ENCODE measurements at regions of chr2 and their contacts with region 1.

Region 1: GRCh38 chr2:199985625-199986207 is 30.3 kb downstream of the MAIP1 start:
- DNase-seq: peak; percentile 38
- ATAC-seq: peak; percentile 93
- H3K4me3 ChIP-seq: no peak overlapping the region
- H3K27ac ChIP-seq: peak overlapping the region; percentile 58; the same call in 1 of the 2 replicates
- H3K4me1 ChIP-seq: no peaks in the 10 kb centered on the region
- H3K27me3 ChIP-seq: no peaks in the 10 kb centered on the region
- CTCF ChIP-seq: peak; percentile 87

Region 2: GRCh38 chr2:200156166-200156835 is 170.6 kb after region 1 on chr2:
- CTCF ChIA-PET with region 1: no interaction called
- POLR2A ChIA-PET with region 1: no interaction called
- in situ Hi-C with region 1: no loop called
- intact Hi-C with region 1: no loop called
- DNase-seq: peak; percentile 20
- ATAC-seq: peak; percentile 66; the same call in 1 of the 2 replicates
- H3K4me3 ChIP-seq: peak overlapping the region in 1 of 2 experiments; percentile 9; a peak in 1 of 4 replicates
- H3K27ac ChIP-seq: no peak overlapping the region
- H3K4me1 ChIP-seq: no peaks in the 10 kb centered on the region
- H3K27me3 ChIP-seq: no peaks in the 10 kb centered on the region
- CTCF ChIP-seq: no peak

Region 3: DNA sequence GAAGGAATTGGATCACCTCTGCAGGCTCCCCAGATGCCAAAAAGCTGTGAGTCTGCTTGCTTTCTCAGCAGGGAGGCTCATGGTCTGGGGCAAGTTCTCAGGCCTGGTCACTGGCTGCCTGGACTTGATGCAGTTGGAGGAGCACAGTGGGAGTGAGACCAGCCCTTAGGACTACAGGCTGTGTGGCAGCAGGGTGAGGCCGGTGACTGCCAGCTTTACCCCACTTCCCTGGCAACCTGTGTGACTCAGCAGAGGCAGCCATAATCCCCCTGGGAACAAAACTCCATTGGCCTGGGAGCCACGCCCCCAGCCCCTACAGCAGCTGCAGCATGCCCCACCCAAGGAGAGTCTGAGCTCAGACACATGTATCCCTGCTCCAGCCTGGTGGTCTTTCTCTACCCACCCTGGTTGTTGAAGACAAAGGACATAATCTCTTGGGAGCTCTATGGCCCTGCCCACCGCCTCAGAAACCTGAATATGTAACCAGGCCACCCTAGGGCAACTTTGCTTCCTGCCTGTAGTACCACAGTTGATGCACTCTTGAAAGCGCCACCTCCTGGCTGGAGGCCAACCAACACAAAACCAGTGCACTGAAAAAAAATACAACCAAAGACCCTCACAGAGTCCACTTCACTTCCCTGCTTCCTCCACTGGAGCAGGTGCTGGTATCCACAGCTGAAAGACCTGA is 214.0 kb after region 1 on chr2:
- CTCF ChIA-PET with region 1: no interaction called
- POLR2A ChIA-PET with region 1: no interaction called
- in situ Hi-C with region 1: no loop called
- intact Hi-C with region 1: loop called (anchors 10 kb)
- DNase-seq: no peak
- ATAC-seq: no peak
- H3K4me3 ChIP-seq: no peak overlapping the region
- H3K27ac ChIP-seq: no peak overlapping the region
- H3K4me1 ChIP-seq: no peaks in the 10 kb centered on the region
- H3K27me3 ChIP-seq: no peaks in the 10 kb centered on the region
- CTCF ChIP-seq: peak; percentile 12